Thyroid gland (tissue), 4 donors: ENCODE measurements at regions of chr18 and their contacts with region 1.

Region 1: GRCh38 chr18:50009773-50010335 is 185.1 kb downstream of the MYO5B start:
- DNase-seq: peak; percentile 54 to 68
- H3K4me3 ChIP-seq: no peak overlapping the region
- H3K27ac ChIP-seq: peak overlapping the region in 1 of 3 donors; percentile 0
- H3K4me1 ChIP-seq: peaks cover 42 to 49% of the 10 kb centered on the region in 2 donors
- H3K27me3 ChIP-seq: no peaks in the 10 kb centered on the region
- CTCF ChIP-seq: peak; percentile 23 to 71 (median 53)
- POLR2A ChIP-seq: no peak

Region 2: GRCh38 chr18:49778971-49779461 is 230.8 kb before region 1 on chr18:
- intact Hi-C with region 1: no loop called
- DNase-seq: peak; percentile 60 to 66
- H3K4me3 ChIP-seq: no peak overlapping the region
- H3K27ac ChIP-seq: no peak overlapping the region
- H3K4me1 ChIP-seq: peaks cover 2 to 12% of the 10 kb centered on the region in 2 donors
- H3K27me3 ChIP-seq: no peaks in the 10 kb centered on the region
- CTCF ChIP-seq: no peak
- POLR2A ChIP-seq: no peak

Region 3: DNA sequence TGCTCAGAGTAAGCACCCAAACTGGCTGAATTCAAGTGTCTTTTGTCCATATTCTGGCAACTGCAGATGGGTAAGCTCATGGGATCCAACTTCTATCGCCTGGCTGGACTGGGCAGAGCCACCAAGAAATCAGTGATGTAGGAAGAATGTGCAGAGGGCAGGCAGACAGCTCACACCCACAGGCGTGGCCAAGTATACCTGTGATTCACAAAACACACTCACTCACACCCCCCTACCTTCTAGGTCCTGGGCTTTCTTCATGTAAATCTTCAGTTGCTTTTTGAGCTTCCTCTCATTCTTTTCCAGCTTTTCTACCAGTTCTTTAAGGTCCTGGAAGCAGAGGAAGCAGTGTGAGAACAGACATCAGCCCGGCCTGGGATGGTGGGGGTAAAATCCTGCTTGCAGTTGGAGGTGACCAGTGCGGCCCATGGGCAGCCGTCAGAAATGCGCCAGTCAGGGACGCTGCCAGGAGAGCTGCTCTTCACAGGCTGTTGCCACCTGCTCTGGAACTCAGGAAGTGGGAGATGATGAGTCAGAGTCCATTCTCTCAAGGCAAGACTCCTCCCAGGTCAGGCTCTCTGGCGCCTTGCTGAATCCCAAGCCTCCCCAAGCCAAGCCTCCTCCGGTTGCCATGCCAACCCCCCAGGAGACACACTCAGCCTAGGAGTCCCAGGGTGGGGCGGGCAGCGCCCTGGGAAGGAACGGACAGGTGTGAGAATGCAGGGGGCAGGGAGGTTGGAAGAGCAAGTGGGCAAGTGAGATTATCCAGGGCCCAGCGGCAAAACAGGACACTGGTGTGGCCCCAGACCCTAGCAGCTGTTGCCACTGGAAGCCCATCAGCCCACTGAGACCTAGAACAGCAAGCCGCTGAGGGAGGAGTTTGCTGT is 160.3 kb before region 1 on chr18:
- intact Hi-C with region 1: no loop called
- DNase-seq: peak; percentile 90 to 94
- H3K4me3 ChIP-seq: no peak overlapping the region
- H3K27ac ChIP-seq: peak overlapping the region; percentile 18 to 82 (median 43)
- H3K4me1 ChIP-seq: peaks cover 10 to 39% of the 10 kb centered on the region in 2 donors
- H3K27me3 ChIP-seq: no peaks in the 10 kb centered on the region
- CTCF ChIP-seq: no peak
- POLR2A ChIP-seq: no peak

Region 4: DNA sequence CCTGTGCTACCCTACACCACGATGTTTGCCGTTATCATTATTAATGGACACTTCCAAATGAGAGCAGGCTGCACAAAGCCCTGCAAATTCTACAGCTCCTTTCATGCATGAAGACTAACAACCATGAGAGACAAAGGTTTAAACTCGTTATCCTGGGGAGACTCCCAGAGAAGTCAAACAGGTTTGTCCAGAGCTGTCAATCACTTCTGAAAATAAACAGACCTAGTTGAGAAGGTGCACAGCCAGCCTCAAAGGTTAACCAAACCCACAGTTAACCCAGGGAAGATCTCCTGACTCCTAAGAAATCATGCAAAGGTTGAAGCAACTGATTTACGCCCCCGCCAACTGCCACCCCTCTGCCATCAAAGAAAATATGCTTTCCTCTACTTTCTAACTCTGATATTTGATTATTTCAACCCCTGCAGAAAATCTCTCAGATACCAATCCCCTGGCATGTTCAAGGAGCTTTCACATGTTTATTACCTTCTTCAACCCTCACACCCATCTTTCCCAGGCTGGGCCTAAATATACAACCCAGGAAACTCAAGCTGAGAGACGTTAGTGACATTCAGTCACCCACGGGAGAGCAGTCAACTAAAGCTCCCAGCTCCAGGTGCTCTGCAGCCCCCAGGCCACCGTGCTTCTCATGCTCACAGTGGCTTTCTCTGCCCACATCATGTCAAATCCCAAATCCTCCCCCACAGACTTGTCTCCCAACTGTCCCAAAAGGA is 149.2 kb after region 1 on chr18:
- intact Hi-C with region 1: no loop called
- DNase-seq: peak in 1 of 2 donors; percentile 6
- H3K4me3 ChIP-seq: no peak overlapping the region
- H3K27ac ChIP-seq: peak overlapping the region in 2 of 3 donors; percentile 57 to 66
- H3K4me1 ChIP-seq: peaks cover 38 to 56% of the 10 kb centered on the region in 2 donors
- H3K27me3 ChIP-seq: no peaks in the 10 kb centered on the region
- CTCF ChIP-seq: no peak
- POLR2A ChIP-seq: no peak

Region 5: DNA sequence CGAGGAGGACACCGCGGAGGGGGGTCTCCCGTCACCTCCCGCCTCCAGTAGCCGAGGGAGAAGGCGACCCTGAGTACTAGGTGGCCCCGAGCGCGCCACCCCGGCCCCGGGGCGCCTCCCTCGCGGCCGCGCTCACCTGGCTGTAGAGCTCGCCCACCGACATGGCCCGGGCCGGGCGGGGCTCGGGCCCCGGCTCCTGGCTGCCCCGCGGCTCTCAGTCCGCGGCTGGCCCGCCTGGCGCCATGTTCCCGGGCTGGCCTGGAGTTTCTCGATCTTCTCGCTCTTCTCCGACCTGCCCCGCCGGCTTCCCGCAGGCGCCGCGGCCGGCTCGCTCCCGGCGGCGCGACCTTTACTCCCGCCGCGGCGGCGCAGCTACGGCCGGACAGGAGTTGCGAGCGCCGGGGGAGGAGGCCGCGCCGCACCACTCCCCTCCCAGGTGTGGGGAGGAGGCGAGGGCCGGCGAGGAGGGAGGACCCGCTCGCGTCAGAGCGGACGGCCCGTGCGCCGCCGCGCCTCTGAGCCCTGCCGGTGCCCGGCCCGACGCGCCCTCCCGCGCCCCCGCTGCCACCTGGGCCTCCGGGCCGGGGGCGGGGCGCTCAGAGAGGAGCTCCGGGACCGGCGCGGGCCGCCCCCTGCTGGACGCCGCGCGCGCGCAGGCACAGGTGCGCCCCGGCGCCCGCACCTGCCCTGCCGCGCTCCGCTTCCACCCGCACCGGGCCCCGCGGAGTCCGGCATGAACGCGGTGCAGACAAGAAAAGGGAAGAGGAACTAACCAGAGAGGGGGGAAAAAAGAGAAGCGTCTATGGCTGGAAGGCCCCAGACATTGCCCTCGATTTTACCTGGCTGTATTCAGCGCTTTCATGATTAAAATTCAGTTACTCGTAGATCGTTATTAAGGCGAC is 185.0 kb after region 1 on chr18 and contains the start of gene MYO5B:
- intact Hi-C with region 1: loop called (anchors 5 kb)
- DNase-seq: peak; percentile 92
- H3K4me3 ChIP-seq: peak within 1 kb of the TSS; percentile 24 to 59 (median 48)
- H3K27ac ChIP-seq: peak within 1 kb of the TSS; percentile 56 to 82 (median 60)
- H3K4me1 ChIP-seq: peaks cover 22 to 23% of the 10 kb centered on the region in 2 donors
- H3K27me3 ChIP-seq: no peaks in the 10 kb centered on the region
- CTCF ChIP-seq: peak in 3 of 6 experiments; percentile 88 to 92 (median 90)
- POLR2A ChIP-seq: peak; percentile 20 to 93
- total RNA-seq, gene MYO5B: 58.2 to 102 (median 89.9) TPM

Region 6: GRCh38 chr18:50231621-50232020 is 221.8 kb after region 1 on chr18:
- intact Hi-C with region 1: no loop called
- DNase-seq: no peak
- H3K4me3 ChIP-seq: no peak overlapping the region
- H3K27ac ChIP-seq: no peak overlapping the region
- H3K4me1 ChIP-seq: no peaks in the 10 kb centered on the region
- H3K27me3 ChIP-seq: no peaks in the 10 kb centered on the region
- CTCF ChIP-seq: no peak
- POLR2A ChIP-seq: no peak